ENCODE measurements at regions of chr14 and their contacts with region 1.

Region 1: DNA sequence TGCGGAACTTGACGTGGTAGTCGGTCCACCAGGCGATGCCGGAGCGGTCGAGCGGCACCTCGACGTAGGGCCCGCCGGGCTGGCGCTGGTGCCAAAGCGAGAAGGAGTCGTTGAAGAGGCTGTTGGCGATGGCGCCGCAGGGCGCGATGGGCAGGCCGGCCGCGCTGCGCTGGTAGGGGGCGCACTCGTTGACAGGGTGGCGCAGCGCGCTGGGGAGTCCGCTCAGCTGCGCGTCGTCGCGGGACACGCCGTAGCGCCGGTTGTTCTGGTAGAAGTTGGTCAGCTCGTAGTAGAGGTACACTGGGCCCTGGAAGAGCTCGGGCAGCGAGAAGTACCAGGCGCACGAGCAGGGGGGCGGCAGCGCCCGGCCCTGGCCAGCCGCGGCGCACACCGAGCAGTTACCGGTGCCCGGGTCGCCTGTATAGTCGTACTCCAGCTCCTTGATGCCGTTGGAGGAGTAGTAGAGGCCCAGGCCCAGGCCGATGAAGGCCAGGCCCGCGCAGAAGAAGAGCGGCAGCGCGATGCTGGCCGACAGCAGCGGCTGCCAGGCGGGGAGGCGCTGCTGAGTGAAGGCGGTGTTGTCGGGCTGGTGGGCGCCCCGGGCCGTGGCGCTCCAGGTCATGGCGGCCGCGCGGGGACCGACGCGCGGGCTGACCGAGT is 482 bp downstream of the TMEM30B start:
- DNase-seq: peak; percentile 83
- H3K4me3 ChIP-seq: peak overlapping the region; percentile 30 to 46; a peak in 3 of 4 replicates
- H3K27ac ChIP-seq: no peak overlapping the region
- H3K4me1 ChIP-seq: peaks cover 1 to 8% of the 10 kb centered on the region in 2 experiments; a peak in 2 of 4 replicates
- H3K27me3 ChIP-seq: no peaks in the 10 kb centered on the region; the same call in 1 of the 2 replicates
- CTCF ChIP-seq: peak; percentile 25; the same call in 1 of the 2 replicates
- EP300 ChIP-seq: no peak
- RAD21 ChIP-seq: no peak

Region 2: DNA sequence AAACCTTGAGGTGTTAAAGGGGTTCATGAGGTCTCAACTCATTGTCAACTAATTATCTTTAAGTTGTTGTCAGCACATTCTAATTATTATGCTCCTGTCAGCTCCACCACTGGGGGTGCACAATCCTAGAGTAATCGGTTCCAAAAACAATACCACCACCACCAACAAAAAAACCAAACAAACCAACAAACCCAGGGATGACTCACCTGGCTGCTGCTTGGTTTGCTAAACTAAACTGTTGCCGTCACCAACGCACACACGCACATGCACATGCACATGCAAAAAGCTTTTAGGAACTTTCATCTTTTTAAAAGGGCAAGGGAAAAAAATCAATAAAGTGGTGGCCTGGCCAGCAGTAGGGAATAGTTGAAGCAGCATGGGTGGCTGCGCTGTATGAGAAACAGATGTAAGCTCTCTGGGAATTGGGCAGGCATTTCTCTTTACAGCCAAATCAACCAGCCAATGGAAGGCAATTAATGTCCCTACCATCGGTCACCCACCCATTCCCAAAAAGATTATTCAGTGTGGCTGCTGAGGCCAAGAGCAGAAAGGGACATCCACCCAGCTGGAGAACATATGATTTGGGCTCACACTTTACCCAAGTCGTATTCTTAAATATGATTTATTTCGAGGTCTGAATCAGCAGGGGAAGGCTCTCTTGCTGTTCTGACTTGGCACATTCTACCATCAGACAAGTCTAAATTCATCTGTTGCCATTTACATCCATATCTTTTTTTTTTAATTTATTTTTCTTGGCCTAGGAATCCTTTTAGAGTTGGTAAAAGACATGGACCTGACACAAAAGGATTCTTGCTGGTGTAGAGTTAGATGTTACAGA is 19.5 kb before region 1 on chr14:
- CTCF ChIA-PET with region 1: interaction called, 104 read pairs
- POLR2A ChIA-PET with region 1: no interaction called
- DNase-seq: no peak
- H3K4me3 ChIP-seq: peak overlapping the region in 1 of 2 experiments; percentile 19; a peak in 1 of 4 replicates
- H3K27ac ChIP-seq: peak overlapping the region; percentile 89 to 99
- H3K4me1 ChIP-seq: peaks cover 29 to 30% of the 10 kb centered on the region in 2 experiments
- H3K27me3 ChIP-seq: no peaks in the 10 kb centered on the region
- CTCF ChIP-seq: peak; percentile 50
- EP300 ChIP-seq: peak in 1 of 2 experiments; percentile 62; a peak in 2 of 4 replicates
- RAD21 ChIP-seq: no peak

Region 3: DNA sequence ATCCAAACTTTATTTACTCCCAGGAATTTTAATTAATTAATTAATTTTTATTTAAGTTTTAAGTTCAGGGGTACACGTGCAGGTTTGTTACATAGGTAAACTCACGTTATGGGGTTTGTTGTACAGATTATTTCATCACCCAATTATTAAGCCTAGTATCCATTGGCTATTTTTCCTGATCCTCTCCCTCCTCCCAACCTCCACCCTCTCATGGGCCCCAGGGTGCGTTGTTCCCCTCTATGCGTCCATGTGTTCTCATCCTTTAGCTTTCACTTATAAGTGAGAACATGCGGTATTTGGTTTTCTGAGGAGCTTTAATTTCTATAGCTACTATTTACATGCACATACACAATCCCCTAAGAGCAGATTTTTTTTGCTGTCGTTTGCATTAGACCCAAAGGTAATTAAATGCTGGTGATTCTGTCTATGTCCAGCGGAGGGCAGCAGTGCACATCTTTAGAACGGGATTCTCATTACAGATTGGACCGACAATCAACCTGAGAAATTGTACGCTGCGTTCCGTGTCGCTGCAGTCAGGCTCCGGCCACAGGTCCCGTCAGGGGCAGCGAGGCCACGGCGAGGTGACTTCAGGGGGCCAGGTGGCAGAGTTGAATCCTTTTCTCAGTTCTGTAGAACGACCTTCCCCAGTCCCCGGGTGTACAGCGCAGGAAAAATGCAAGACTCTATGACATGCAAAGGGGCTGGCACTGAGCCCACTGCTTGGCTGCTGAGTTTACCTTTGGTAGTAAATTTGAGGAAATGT is 11.2 kb before region 1 on chr14:
- CTCF ChIA-PET with region 1: interaction called, 104 read pairs
- POLR2A ChIA-PET with region 1: no interaction called
- DNase-seq: peak; percentile 74
- H3K4me3 ChIP-seq: peak overlapping the region; percentile 47 to 59
- H3K27ac ChIP-seq: peak overlapping the region in 1 of 2 experiments; percentile 77; a peak in 2 of 4 replicates
- H3K4me1 ChIP-seq: no peaks in the 10 kb centered on the region; a peak in 1 of 4 replicates
- H3K27me3 ChIP-seq: no peaks in the 10 kb centered on the region
- CTCF ChIP-seq: peak; percentile 85
- EP300 ChIP-seq: no peak
- RAD21 ChIP-seq: peak; percentile 77

Region 4: GRCh38 chr14:61290701-61291100 is 10.0 kb after region 1 on chr14:
- CTCF ChIA-PET with region 1: interaction called, 29 read pairs
- POLR2A ChIA-PET with region 1: no interaction called
- DNase-seq: no peak
- H3K4me3 ChIP-seq: no peak overlapping the region
- H3K27ac ChIP-seq: no peak overlapping the region
- H3K4me1 ChIP-seq: peaks cover 0 to 4% of the 10 kb centered on the region in 2 experiments; a peak in 1 of 4 replicates
- H3K27me3 ChIP-seq: no peaks in the 10 kb centered on the region
- CTCF ChIP-seq: no peak
- EP300 ChIP-seq: no peak
- RAD21 ChIP-seq: no peak

Measured in SK-N-SH (cell line).